Activated B cell treated with CpG ODN at 0.5 μM for 24 hours (primary cell): ENCODE measurements at regions of chr11 and their contacts with region 1.

Region 1: DNA sequence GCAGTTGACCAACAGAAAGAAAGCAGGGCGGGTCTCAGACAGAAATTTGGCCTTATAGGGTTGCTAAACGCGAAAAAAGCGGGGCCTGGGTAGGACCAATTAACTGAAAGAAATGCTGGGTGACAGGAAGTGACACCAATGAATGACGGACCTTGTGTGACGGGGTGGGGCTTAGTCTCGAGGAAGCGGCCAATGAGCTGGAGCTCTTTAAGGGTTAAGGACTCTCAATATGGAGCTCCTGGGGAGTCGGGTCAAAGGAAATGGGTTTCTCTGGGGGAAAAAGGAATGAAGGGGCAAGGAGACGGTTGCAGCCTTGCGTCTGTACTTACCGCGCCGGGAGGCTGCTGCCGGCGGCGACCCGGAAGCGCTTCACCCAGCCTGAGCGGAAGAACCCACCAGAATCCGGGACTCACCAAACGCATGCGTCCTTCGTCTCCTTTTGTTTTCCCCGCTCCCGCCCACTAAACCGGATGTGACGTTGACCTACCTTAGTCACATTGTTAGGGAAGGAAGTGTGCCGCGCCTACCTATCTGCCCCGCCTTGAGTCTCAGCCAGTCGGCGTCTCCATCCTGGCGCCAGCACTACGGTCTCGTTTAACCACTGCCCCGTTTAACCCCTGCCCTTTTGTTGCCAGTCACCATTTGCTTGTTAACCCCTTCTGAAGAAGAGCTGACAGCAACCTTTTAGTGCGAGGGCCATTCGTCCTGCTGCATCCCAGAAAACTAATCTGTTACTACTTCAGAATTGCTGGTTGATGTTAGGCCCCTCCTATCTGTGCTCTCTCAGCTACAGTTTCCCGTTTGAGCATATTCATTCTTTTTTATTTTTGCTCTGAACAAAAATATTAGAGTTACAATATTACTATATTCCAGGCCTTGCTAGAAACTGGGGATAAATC is at the start of gene ANAPC15:
- DNase-seq: peak; percentile 90
- ATAC-seq: peak; percentile 90
- H3K4me3 Mint-ChIP-seq: peak within 1 kb of the TSS; percentile 97
- H3K27ac Mint-ChIP-seq: peak within 1 kb of the TSS; percentile 100
- H3K4me1 Mint-ChIP-seq: peaks cover 25% of the 10 kb centered on the region
- H3K27me3 Mint-ChIP-seq: peaks cover 13% of the 10 kb centered on the region
- CTCF ChIP-seq: no peak
- total RNA-seq, gene ANAPC15: 44.4 and 56.3 TPM in 2 replicates

Region 2: DNA sequence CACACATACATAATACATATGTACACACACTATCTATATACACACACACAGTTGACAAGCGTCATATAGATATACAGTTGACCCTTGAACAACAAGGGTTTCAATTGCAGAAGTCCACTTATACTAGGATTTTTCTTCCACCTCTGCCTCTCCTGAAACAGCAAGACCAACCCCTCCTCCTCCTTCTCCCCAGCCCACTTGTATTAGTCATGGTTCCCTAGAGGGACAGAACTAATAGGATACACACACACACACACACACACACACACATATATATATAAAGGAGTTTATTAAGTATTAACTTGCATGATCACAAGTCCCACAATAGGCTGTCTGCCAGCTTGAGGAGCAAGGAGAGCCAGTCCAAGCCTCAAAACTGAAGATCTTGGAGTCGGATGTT is 757.3 kb before region 1 on chr11:
- CTCF ChIA-PET with region 1: no interaction called
- POLR2A ChIA-PET with region 1: no interaction called
- intact Hi-C with region 1: no loop called
- DNase-seq: no peak
- ATAC-seq: no peak
- H3K4me3 Mint-ChIP-seq: no peak overlapping the region
- H3K27ac Mint-ChIP-seq: no peak overlapping the region
- H3K4me1 Mint-ChIP-seq: no peaks in the 10 kb centered on the region
- H3K27me3 Mint-ChIP-seq: peaks cover 16% of the 10 kb centered on the region
- CTCF ChIP-seq: no peak

Region 3: GRCh38 chr11:71787098-71787823 is 325.3 kb before region 1 on chr11:
- CTCF ChIA-PET with region 1: no interaction called
- POLR2A ChIA-PET with region 1: no interaction called
- intact Hi-C with region 1: loop called (anchors 1 kb)
- DNase-seq: peak; percentile 95
- ATAC-seq: peak; percentile 95
- H3K4me3 Mint-ChIP-seq: peak overlapping the region; percentile 95
- H3K27ac Mint-ChIP-seq: peak overlapping the region; percentile 96
- H3K4me1 Mint-ChIP-seq: peaks cover 19% of the 10 kb centered on the region
- H3K27me3 Mint-ChIP-seq: no peaks in the 10 kb centered on the region
- CTCF ChIP-seq: no peak

Region 4: GRCh38 chr11:71913756-71914526 is 198.6 kb before region 1 on chr11:
- CTCF ChIA-PET with region 1: no interaction called
- POLR2A ChIA-PET with region 1: no interaction called
- intact Hi-C with region 1: no loop called
- DNase-seq: no peak
- ATAC-seq: no peak
- H3K4me3 Mint-ChIP-seq: no peak overlapping the region
- H3K27ac Mint-ChIP-seq: no peak overlapping the region
- H3K4me1 Mint-ChIP-seq: peaks cover 8% of the 10 kb centered on the region
- H3K27me3 Mint-ChIP-seq: no peaks in the 10 kb centered on the region
- CTCF ChIP-seq: no peak